ENCODE measurements at regions of chr1 and their contacts with region 1.

Region 1: GRCh38 chr1:226702957-226703831 is 35.9 kb downstream of the ITPKB start:
- DNase-seq: peak; percentile 73
- H3K4me3 ChIP-seq: peak overlapping the region; percentile 49 to 56 (median 54)
- H3K27ac ChIP-seq: peak overlapping the region; percentile 49
- H3K4me1 ChIP-seq: peaks cover 8% of the 10 kb centered on the region
- H3K27me3 ChIP-seq: no peaks in the 10 kb centered on the region
- CTCF ChIP-seq: no peak
- POLR2A ChIP-seq: peak; percentile 81

Region 2: GRCh38 chr1:226649780-226650179 is 53.4 kb before region 1 on chr1:
- CTCF ChIA-PET with region 1: interaction called, 4 read pairs
- POLR2A ChIA-PET with region 1: interaction called, 3 read pairs
- dilution Hi-C with region 1: no loop called
- intact Hi-C with region 1: loop called (anchors 1 kb)
- DNase-seq: peak; percentile 68
- H3K4me3 ChIP-seq: no peak overlapping the region
- H3K27ac ChIP-seq: no peak overlapping the region
- H3K4me1 ChIP-seq: peaks cover 12% of the 10 kb centered on the region
- H3K27me3 ChIP-seq: no peaks in the 10 kb centered on the region
- CTCF ChIP-seq: peak in 1 of 2 donors; percentile 38
- POLR2A ChIP-seq: no peak

Region 3: DNA sequence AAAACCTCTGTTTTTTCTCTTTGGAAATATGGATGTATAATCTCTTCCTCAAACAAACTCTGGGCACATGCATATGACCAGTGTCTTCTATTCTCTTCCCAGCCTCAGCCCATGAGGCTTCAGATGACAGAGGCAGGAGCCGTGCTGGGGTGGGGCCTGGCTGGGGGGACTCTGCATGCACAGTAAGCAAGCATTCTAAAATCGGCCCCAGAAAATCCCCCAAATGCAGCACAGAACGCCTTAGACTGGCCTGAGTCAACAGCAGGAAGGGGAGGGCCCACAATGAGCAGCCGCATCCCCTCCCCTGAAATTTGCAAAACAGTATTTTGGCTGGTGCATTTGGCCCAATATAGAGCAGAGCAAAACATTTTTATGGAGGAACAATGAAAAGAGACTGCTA is 11.9 kb before region 1 on chr1:
- CTCF ChIA-PET with region 1: interaction called, 4 read pairs
- POLR2A ChIA-PET with region 1: no interaction called
- dilution Hi-C with region 1: no loop called
- intact Hi-C with region 1: loop called (anchors 1 kb)
- DNase-seq: peak; percentile 26
- H3K4me3 ChIP-seq: no peak overlapping the region
- H3K27ac ChIP-seq: peak overlapping the region; percentile 42
- H3K4me1 ChIP-seq: peaks cover 14% of the 10 kb centered on the region
- H3K27me3 ChIP-seq: no peaks in the 10 kb centered on the region
- CTCF ChIP-seq: no peak
- POLR2A ChIP-seq: no peak